ENCODE measurements at regions of chr10 and their contacts with region 1.

Region 1: DNA sequence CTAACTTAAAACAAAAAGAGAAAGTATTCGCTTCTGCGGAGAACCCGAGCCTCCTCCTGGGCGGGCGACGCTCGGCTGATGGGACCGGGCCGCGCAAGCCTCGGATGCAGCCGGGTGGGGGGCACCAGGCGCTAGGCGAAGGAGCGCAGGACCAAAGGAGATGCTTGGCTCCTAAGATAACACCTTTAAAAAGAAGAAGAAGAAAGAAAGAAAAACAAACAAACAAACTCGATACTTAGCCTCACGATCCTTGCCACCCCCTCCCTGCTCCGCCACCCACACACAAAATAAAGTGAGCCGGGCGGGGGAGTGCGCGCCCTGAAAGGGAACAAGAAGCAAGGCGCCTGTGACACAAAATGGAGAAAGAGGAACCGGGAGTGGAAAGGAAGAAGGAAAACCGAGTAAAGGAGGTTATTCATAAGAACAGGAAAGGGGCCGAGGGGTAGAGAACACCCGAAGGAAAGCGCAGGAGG is 34.0 kb upstream of the EBLN1 start:
- DNase-seq: peak; percentile 61
- ATAC-seq: peak; percentile 45
- H3K4me3 Mint-ChIP-seq: peak overlapping the region; percentile 97
- H3K27ac Mint-ChIP-seq: peak overlapping the region; percentile 100
- H3K4me1 Mint-ChIP-seq: peaks cover 27% of the 10 kb centered on the region
- H3K27me3 Mint-ChIP-seq: no peaks in the 10 kb centered on the region
- CTCF ChIP-seq: no peak

Region 2: DNA sequence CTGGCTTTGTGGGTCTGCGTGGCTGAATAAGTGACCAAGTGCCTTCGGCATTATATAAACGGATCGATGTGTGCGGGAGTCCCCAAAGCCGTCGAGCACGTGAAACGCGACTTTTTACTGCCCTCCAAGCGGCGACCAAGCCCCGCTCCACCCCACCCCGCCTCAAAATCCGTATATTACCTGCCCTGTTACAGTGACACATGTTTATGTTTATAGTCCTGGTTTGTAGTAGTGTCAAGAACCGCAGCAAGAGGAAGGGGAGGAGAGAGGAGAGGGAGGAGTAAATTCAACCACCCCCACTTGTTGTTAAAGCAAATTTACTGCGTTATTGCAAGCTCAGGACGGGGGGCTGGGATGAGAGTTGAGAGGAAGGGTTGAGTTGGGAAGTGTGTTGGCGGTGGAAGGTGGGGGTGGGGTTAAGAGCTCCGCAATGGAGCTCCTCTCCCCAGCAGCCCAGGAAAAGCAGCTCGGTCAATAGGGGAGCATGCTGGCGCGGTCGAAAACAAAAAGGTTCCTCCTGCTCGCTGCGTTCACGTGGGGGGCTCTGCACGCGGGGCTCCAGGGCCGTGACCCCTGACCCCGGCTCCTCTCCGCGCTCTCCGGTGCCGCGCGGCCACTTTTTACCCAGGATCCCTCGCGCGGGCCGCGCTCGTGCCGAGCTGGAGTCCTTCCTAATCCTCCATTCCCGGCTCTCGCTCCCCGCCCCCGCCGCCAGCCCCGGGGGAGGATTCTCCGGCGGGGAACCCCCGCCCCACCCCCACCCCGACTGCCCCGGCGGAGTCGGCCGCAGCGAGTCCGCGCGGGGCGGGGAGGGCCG is 726.2 kb before region 1 on chr10 and contains the start of gene SKIDA1:
- CTCF ChIA-PET with region 1: no interaction called
- POLR2A ChIA-PET with region 1: no interaction called
- intact Hi-C with region 1: loop called (anchors 2 kb)
- DNase-seq: peak; percentile 35
- ATAC-seq: peak; percentile 65
- H3K4me3 Mint-ChIP-seq: peak within 1 kb of the TSS; percentile 89
- H3K27ac Mint-ChIP-seq: peak within 1 kb of the TSS; percentile 88
- H3K4me1 Mint-ChIP-seq: peaks cover 27% of the 10 kb centered on the region
- H3K27me3 Mint-ChIP-seq: peaks cover 37% of the 10 kb centered on the region
- CTCF ChIP-seq: no peak
- total RNA-seq, gene SKIDA1: 0.60 TPM in 1 of 2 replicates, not detected in the other

Region 3: DNA sequence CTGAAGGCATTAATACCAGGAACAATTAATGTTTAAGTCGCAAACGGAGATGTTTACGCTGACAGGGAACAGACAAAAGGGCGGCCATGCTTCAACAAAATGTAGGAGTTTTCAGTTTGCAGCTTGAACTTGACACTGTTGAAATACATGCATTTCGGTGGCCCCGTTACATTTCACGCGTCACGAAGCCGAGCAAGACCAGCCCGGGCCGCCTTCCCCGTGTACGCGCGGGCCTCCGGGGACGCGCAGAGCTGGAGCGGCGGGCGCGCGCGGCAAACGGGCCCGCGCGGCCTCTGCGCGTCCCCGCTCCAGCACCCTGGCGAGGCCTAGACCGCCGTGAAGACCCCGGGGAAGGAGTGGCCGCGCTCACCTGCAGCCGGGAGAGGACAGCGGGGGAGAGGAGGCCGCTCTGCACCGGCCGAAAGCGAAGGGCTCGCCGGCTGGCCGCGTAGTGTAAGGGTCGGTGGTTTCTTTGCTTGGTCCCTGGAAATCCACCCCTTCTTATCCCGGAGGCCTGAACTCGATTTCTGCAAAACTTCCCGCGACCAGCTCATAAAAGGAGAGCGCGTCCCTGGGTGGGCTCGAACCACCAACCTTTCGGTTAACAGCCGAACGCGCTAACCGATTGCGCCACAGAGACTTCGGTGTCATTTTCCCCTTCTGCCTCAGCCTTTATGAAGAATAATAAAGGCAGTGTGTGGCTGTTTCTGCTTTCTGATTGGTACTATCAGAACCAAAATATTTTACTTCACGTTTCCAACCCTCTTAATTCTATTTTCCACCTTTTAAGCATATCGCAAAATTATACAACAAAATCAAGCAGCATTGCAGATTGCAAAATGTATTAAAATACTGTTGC is 22.6 kb before region 1 on chr10:
- CTCF ChIA-PET with region 1: interaction called, 9 read pairs
- POLR2A ChIA-PET with region 1: interaction called, 60 read pairs
- intact Hi-C with region 1: loop called (anchors 1 kb)
- DNase-seq: peak; percentile 81
- ATAC-seq: peak; percentile 79
- H3K4me3 Mint-ChIP-seq: peak overlapping the region; percentile 88
- H3K27ac Mint-ChIP-seq: peak overlapping the region; percentile 96
- H3K4me1 Mint-ChIP-seq: peaks cover 15% of the 10 kb centered on the region
- H3K27me3 Mint-ChIP-seq: peaks cover 7% of the 10 kb centered on the region
- CTCF ChIP-seq: no peak

Region 4: GRCh38 chr10:22340362-22341189 is 88.8 kb after region 1 on chr10:
- CTCF ChIA-PET with region 1: interaction called, 3 read pairs
- POLR2A ChIA-PET with region 1: interaction called, 26 read pairs
- intact Hi-C with region 1: loop called (anchors 1 kb)
- DNase-seq: peak; percentile 77
- ATAC-seq: peak; percentile 61
- H3K4me3 Mint-ChIP-seq: peak overlapping the region; percentile 90
- H3K27ac Mint-ChIP-seq: peak overlapping the region; percentile 88
- H3K4me1 Mint-ChIP-seq: peaks cover 34% of the 10 kb centered on the region
- H3K27me3 Mint-ChIP-seq: peaks cover 45% of the 10 kb centered on the region
- CTCF ChIP-seq: no peak

Region 5: GRCh38 chr10:22550732-22551131 is 298.9 kb after region 1 on chr10:
- CTCF ChIA-PET with region 1: no interaction called
- POLR2A ChIA-PET with region 1: no interaction called
- intact Hi-C with region 1: loop called (anchors 5 kb)
- DNase-seq: peak; percentile 50
- ATAC-seq: peak; percentile 64
- H3K4me3 Mint-ChIP-seq: no peak overlapping the region
- H3K27ac Mint-ChIP-seq: no peak overlapping the region
- H3K4me1 Mint-ChIP-seq: peaks cover 3% of the 10 kb centered on the region
- H3K27me3 Mint-ChIP-seq: no peaks in the 10 kb centered on the region
- CTCF ChIP-seq: no peak

Region 6: GRCh38 chr10:22988581-22989360 is 737.0 kb after region 1 on chr10:
- CTCF ChIA-PET with region 1: interaction called, 3 read pairs
- POLR2A ChIA-PET with region 1: no interaction called
- intact Hi-C with region 1: loop called (anchors 2 kb)
- DNase-seq: peak; percentile 28
- ATAC-seq: peak; percentile 70
- H3K4me3 Mint-ChIP-seq: no peak overlapping the region
- H3K27ac Mint-ChIP-seq: peak overlapping the region; percentile 10
- H3K4me1 Mint-ChIP-seq: peaks cover 8% of the 10 kb centered on the region
- H3K27me3 Mint-ChIP-seq: peaks cover 11% of the 10 kb centered on the region
- CTCF ChIP-seq: peak; percentile 37

Measured in activated B cell treated with CpG ODN at 0.5 μM for 24 hours (primary cell).